Right ventricle myocardium superior (tissue), 1 donor: ENCODE measurements at regions of chr13 and their contacts with region 1.

Region 1: DNA sequence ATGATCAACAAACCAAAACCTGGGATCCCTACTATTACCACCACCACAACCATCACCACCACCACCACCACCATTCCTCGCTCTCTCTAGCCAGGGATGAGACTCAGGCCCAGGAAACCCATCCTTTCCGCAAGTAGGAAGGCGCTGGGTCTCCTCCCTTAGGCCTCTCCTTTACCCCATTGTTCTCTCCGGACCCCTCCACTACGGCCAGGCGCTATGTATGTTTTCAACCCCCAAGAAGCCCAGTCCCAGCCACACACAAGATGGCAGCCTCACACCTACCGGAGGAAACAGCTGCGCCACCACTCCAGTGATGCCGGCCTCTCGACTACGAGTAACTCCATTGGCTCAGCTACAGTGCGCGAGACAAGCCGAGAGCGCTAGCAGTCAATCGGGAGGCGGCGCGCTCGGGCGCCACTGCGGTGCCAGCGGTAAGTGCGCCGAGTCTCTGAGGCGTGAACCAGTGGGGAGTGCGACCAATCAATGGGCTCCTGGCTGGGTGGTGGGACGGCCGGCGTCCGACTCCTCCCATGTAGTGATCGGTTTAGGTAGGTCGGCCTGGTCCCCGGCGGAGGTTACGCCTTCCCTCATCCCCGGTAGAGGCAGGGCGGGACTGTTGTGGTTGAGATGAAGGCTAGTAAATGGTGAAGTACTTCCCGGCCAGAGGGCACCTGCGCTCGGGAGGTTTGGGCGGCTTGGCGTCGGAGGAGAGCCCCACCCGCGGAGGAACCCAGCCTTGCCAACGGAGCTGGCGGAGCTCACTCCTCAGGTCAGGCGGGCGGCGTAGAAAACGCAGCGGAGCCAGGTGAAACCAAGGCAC is at the starts of genes CAB39L and SETDB2:
- DNase-seq: peak; percentile 100
- ATAC-seq: peak; percentile 98
- total RNA-seq, gene CAB39L: 19.3 TPM
- total RNA-seq, gene SETDB2: 13.4 TPM

Region 2: GRCh38 chr13:49308089-49308875 is 135.6 kb before region 1 on chr13:
- intact Hi-C with region 1: loop called (anchors 5 kb)
- DNase-seq: peak; percentile 91
- ATAC-seq: peak; percentile 92